Posterior cingulate gyrus (tissue), 11 donors: ENCODE measurements at regions of chr10 and their contacts with region 1.

Region 1: DNA sequence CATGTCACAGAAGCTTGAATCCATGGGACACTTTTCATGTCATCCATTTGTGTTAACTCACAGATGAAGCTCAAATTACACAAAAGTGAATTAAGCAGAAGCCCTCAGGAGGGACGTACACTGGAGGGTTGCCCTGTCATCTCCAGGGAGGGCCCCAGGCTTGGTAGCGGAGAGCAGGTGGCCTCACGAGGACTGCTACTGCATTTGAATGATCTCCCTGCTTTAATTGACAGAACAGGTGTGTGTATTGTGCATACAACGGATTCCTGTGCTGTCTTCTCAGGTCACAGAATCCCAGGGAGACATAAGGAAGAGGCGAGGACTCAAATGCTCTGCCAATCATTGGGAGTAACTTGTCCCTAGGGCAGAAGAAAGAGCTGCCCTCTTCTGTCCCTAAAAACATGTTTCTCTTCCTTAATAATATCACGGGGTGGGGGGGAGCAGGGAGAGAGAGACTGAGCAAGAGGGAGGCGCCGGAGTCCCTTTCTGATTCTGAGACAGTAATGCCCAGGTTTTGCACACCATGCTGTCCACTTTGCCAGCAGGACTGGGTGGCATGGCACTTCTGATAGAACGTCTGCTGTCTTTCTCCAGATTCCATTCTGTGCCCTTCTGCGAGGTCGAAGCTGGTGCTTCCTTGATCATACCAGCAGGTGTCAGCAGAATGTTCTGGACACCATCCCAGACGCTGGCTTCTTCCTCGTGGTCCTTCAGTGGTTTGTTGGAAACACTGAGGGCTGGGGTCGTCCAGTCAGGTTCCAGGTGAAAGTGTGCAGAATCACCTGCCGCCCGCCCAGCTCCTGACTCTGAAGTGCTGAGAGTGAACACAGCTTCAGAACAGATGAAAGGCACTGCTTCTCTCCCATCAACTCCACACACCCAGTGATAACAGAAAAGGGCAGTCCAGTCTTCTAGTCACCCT is 26.2 kb upstream of the RASGEF1A start:
- DNase-seq: peak in 8 of 10 donors; percentile 21 to 91 (median 64)

Region 2: GRCh38 chr10:43070121-43071085 is 222.6 kb before region 1 on chr10:
- intact Hi-C with region 1: no loop called
- DNase-seq: peak in 2 of 10 donors; percentile 64 to 78

Region 3: DNA sequence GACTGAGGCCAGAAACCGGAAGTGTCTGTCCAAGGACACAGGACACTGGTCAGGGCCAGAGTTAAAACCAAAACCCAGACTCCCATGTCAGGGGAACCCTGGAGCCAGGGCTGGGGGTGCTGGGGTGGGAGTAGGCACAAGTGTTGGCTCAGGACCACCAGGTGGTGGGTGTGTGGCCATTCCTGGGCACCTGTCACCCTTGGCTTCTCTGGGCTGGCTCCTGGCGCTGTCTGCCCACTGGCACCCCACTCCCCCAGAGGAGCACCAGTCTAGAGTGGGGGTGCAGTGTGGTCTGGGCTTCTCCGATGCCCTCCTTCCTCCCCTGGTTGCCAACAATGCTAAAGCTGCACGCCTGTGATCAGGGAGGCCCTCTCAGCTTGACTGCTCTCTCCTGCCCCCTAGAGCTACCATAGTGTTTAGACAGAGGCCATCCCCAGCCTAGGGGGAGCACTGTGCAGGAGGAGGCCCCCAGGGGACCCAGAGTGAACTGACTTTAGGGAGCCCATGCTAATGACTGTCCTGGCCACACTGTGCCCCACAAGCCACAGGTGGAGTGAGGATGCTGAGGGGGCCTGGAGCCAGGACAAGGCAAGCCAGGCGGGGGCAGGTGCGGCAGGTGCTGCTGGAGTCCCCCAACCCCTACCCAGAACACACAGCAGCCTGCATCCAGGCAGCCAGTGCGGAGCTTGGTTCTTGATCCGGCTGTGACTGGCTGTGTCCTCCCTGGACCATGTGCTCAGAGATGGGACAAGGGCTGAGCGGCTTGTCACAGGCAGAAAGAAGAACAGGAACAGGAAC is 37.2 kb before region 1 on chr10:
- intact Hi-C with region 1: no loop called
- DNase-seq: peak in 5 of 10 donors; percentile 30 to 84 (median 68)

Region 4: DNA sequence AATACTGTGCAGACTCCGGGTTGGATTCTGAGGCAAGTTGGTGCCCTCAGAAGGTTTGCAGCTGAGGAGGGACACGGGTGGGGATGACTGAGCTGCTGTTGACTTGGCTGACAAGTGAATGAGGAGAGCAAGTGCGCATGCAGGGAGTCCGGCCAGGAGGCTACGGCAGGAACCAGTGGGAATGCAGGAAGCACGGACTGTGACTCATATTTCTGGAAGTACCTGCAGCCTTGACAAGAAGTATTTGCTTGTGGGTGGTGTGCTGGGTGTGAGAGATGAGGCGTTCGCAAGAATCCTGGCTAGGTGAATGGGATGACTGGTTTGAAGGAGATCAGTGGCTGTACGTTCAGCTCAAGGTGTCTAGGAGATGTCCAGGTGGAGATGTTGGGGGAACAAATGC is 47.6 kb after region 1 on chr10:
- intact Hi-C with region 1: no loop called
- DNase-seq: peak in 7 of 10 donors; percentile 36 to 92 (median 61)

Region 5: GRCh38 chr10:43461950-43462349 is 168.9 kb after region 1 on chr10:
- intact Hi-C with region 1: loop called (anchors 1 kb)
- DNase-seq: no peak

Region 6: DNA sequence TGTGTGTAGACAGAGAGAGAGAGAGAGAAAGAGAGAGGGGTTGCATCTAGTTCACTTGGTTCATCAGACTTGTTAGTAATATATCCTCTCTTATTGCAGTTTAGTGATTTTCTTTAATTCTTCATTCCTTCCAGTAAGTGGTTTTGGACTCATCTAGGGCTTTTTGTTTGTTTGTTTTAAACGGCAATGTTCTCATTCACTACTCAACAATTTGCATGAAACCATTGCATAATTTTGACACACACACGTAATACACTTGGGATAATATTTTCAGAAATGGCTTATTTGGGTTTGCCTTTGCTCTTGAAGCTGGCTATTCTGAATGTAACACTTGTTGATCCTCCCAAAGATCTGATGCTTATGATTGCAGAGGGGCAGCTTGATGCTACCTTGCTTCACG is 372.0 kb after region 1 on chr10:
- intact Hi-C with region 1: no loop called
- DNase-seq: no peak